ENCODE measurements at regions of chr4 and their contacts with region 1.

Region 1: DNA sequence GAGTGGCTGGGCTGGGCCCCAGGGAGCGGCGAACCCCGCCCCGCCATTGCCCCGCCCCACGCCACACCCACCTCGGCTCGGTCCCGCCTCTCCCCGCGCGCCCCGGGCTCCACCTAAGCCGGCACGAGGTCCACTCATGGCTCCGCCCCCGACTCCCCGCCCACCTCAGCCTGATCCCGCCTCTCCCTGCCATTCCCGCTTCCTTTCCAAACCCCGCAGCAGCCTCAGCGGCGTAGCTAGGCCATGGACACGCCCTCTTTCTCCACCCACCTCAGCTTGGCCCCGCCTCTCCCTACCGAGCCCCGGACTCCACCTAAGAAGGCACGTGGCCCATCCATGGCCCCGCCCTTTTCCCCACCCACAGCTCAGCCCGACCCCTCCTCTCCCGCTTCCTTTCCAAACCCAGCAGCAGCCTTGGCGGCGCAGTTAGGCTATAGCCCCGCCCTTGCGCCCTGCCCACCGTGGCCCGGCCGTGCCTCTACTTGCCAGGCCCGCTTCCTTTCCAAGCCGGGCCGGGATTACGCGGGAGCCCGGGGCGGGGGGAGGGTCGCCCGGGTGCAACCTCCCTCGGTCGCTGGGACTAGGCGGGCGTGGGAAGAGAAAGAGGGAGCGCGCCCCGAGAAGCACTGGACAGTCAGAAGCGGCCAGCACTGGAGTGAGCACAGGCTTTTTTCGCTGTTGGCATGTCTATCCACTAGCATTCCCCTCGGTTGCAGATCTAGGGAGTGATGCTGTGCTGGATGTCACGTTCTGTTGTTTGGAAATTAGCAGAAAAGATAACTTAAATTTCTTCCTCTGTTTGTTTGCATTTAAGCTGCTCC is at the start of gene RELL1:
- DNase-seq: peak; percentile 100
- ATAC-seq: peak; percentile 99
- H3K4me3 ChIP-seq: peak within 1 kb of the TSS; percentile 44 to 71
- H3K27ac ChIP-seq: peak within 1 kb of the TSS in 1 of 2 donors; percentile 78
- H3K4me1 ChIP-seq: peaks cover 0 to 3% of the 10 kb centered on the region in 2 donors
- H3K27me3 ChIP-seq: no peaks in the 10 kb centered on the region
- total RNA-seq, gene RELL1: 33.2 to 42.5 TPM

Region 2: DNA sequence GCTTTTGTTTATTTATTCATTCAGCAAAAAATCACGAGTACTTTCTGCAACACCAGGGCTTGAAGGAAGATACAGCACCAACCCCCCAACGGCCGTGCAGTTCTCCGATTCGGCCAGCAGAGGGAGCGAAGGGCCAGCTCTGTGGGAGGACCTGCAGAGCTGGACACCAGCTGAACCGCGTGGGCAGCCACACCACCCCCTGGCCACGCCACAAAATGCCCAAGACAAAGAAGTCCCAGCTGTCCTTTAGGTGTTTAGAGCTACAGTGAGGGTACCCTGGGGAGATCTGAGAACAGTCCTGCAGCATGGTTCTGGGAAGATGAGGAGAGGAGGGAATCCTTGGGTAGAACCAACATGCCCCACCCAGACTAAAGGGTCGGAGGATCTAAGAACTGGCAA is 83.5 kb before region 1 on chr4:
- intact Hi-C with region 1: loop called (anchors 10 kb)
- DNase-seq: peak; percentile 86 to 93
- ATAC-seq: peak; percentile 93
- H3K4me3 ChIP-seq: no peak overlapping the region
- H3K27ac ChIP-seq: no peak overlapping the region
- H3K4me1 ChIP-seq: no peaks in the 10 kb centered on the region
- H3K27me3 ChIP-seq: no peaks in the 10 kb centered on the region

Region 3: GRCh38 chr4:37666625-37667071 is 19.9 kb before region 1 on chr4:
- intact Hi-C with region 1: loop called in 1 of 2 experiments (anchors 2 kb)
- DNase-seq: peak in 1 of 2 donors; percentile 56
- ATAC-seq: peak; percentile 66
- H3K4me3 ChIP-seq: no peak overlapping the region
- H3K27ac ChIP-seq: no peak overlapping the region
- H3K4me1 ChIP-seq: peaks cover 7 to 9% of the 10 kb centered on the region in 2 donors
- H3K27me3 ChIP-seq: no peaks in the 10 kb centered on the region

Region 4: GRCh38 chr4:37758226-37758625 is 71.6 kb after region 1 on chr4:
- intact Hi-C with region 1: loop called in 1 of 2 experiments (anchors 5 kb)
- DNase-seq: peak in 1 of 2 donors; percentile 54
- ATAC-seq: peak; percentile 31
- H3K4me3 ChIP-seq: no peak overlapping the region
- H3K27ac ChIP-seq: no peak overlapping the region
- H3K4me1 ChIP-seq: no peaks in the 10 kb centered on the region
- H3K27me3 ChIP-seq: no peaks in the 10 kb centered on the region